ENCODE measurements at regions of chr2 and their contacts with region 1.

Region 1: DNA sequence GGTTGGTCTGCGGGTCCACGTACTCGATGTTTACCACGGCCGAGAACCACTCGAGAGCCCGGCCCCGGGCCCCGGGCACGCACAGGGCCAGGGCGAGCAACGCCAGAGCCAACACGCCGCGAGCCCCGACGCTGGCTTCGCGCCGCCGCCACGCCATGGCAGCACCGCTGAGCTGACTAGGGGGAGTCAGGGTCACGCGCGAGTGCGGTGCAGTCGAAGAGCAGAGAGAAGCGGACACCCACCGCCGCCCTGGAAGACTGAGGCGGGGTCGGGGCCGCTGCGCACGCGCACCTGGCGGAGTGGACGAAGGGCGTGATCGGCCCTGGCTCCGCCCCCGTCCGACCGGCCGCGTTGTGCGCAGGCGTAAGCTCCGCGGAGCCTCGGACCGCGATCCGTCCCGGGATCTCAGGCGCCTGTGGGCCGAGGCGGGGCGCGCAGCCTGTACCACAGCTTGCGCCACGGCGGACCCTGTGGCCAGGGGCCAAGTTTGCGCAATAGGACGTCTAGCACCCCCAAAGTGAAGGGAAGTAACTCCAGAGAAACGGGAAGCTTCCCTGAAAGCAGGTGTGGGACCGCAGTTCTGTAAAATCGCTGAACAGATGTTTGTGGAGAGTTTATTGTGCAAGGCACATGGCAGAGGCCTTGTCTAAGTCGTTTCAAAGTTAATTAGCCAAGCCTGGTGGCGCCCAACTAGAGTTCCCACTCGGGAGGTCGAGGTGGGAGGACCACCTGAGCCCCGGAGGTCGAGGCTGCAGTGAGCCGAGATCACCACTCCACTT is at the start of gene RNF149:
- DNase-seq: peak; percentile 97 to 98
- ATAC-seq: peak; percentile 97
- H3K4me3 ChIP-seq: peak within 1 kb of the TSS; percentile 56 to 80
- H3K27ac ChIP-seq: peak within 1 kb of the TSS; percentile 8 to 64
- H3K4me1 ChIP-seq: peaks cover 0 to 3% of the 10 kb centered on the region in 2 donors
- H3K27me3 ChIP-seq: no peaks in the 10 kb centered on the region
- total RNA-seq, gene RNF149: 71.6 to 92.1 TPM

Region 2: GRCh38 chr2:101252408-101253012 is 56.1 kb before region 1 on chr2 and contains the start of gene CNOT11:
- intact Hi-C with region 1: loop called (anchors 1 to 2 kb)
- DNase-seq: peak; percentile 100
- ATAC-seq: peak; percentile 99
- H3K4me3 ChIP-seq: peak within 1 kb of the TSS; percentile 79 to 92
- H3K27ac ChIP-seq: peak within 1 kb of the TSS in 1 of 2 donors; percentile 73
- H3K4me1 ChIP-seq: peaks cover 0 to 6% of the 10 kb centered on the region in 2 donors
- H3K27me3 ChIP-seq: no peaks in the 10 kb centered on the region
- total RNA-seq, gene CNOT11: 25.0 to 26.4 TPM

Measured in aorta (tissue), 5 donors.